Transverse colon (tissue), 4 donors: ENCODE measurements at regions of chr7 and their contacts with region 1.

Region 1: GRCh38 chr7:151863386-151864079 is 13.4 kb downstream of the PRKAG2 start:
- DNase-seq: no peak
- H3K4me3 ChIP-seq: no peak overlapping the region
- H3K27ac ChIP-seq: no peak overlapping the region
- H3K4me1 ChIP-seq: peaks cover 0 to 15% (median 5%) of the 10 kb centered on the region in 4 donors
- H3K27me3 ChIP-seq: no peaks in the 10 kb centered on the region
- CTCF ChIP-seq: peak in 2 of 5 experiments; percentile 5 to 17
- EP300 ChIP-seq: no peak
- POLR2A ChIP-seq: no peak

Region 2: GRCh38 chr7:151795168-151795811 is 68.2 kb before region 1 on chr7:
- in situ Hi-C with region 1: no loop called
- intact Hi-C with region 1: loop called (anchors 10 kb)
- DNase-seq: no peak
- H3K4me3 ChIP-seq: no peak overlapping the region
- H3K27ac ChIP-seq: no peak overlapping the region
- H3K4me1 ChIP-seq: peaks cover 5 to 26% (median 9%) of the 10 kb centered on the region in 4 donors
- H3K27me3 ChIP-seq: no peaks in the 10 kb centered on the region
- CTCF ChIP-seq: no peak
- EP300 ChIP-seq: no peak
- POLR2A ChIP-seq: no peak